ENCODE measurements at regions of chr16 and their contacts with region 1.

Region 1: DNA sequence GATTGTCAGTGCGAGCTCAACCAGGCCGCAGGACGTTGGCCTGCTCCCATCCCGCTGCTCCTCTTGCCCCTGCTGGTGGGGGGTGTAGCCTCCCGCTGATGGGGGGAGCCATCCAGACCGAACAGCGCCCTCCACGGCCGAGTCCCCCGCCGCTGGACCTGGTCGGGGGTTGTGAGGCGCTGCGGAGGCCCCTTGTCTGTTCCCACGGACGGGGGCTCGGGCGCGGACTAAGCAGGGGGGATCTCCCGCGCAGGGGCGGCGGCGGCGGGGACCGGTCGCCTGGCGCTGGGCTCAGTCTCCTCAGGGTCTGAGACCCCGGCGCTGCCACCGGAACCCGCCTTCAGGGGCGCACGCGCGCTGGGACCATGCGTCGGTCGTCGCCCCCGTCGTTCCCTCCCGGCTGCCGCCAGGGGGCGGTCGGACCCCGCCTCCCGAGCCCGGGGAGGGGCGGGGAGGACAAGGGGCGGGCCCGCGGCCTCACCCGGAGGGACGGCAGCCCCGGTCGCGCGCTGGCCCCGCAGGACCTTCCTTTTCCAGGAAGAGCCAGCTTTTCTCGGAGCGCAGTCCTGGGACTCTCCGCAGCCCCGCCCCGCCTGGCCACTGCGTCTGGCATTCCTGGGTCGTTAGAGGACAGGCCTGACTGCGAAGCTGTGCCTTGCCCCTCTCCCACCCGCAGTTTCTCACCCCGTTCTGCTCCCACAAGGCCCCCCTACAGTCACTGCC is 6.3 kb upstream of the IL32 start:
- DNase-seq: peak; percentile 41
- H3K4me3 ChIP-seq: peak overlapping the region; percentile 98
- H3K27me3 ChIP-seq: no peaks in the 10 kb centered on the region
- CTCF ChIP-seq: peak; percentile 51

Region 2: GRCh38 chr16:3038256-3038655 is 20.9 kb before region 1 on chr16:
- CTCF ChIA-PET with region 1: interaction called, 10 read pairs
- POLR2A ChIA-PET with region 1: no interaction called
- DNase-seq: no peak
- H3K4me3 ChIP-seq: no peak overlapping the region
- H3K27me3 ChIP-seq: peaks cover 47% of the 10 kb centered on the region
- CTCF ChIP-seq: no peak

Region 3: DNA sequence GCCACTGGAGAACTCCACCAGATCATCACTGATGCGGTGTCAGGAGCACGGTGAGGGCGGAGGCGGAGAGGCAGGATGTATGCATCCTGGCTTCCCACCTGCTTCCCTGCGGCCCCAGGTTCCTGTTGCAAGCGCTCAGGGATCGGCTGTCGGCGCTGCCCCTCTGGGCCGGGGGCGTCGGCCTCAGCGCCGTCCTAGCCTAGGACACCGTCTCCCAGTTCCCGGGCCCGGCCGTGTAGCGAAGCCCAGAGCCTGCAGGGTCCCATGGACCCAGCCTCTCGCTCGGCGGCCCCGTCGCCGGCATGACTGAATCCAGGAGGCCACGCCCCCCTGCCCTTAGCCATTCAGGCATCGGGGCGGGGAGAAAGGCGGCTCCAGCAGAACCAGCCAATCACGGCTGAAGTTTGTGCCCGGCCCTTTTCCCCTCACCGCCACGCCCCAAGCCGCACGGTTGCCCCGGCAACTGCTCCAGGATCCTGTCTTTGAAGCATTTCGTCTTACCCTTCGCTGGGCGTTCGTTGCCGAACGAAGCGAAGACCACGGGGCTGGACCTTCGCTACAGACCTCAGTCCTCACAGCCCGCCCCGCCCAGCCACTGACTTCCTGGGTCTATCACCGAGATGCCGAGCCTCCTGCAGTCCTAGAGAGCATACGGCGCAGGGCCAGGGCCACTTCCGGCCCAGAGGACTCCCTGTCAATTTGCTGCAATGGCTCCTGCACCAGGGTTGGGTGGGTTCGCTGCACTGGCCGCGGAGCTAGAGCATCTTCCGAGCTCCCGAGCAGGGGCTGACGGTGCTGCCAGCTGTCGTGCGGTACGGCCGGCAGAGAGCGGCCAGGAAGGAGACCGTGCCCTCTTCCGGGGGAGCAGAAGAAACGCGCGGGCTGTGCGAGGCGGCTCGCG is 65.1 kb after region 1 on chr16:
- CTCF ChIA-PET with region 1: interaction called, 56 read pairs
- POLR2A ChIA-PET with region 1: no interaction called
- DNase-seq: peak; percentile 61
- H3K4me3 ChIP-seq: peak overlapping the region; percentile 68
- H3K27me3 ChIP-seq: no peaks in the 10 kb centered on the region
- CTCF ChIP-seq: peak; percentile 51

Region 4: GRCh38 chr16:3158471-3159314 is 99.5 kb after region 1 on chr16:
- CTCF ChIA-PET with region 1: interaction called, 14 read pairs
- POLR2A ChIA-PET with region 1: no interaction called
- DNase-seq: no peak
- H3K4me3 ChIP-seq: peak overlapping the region; percentile 60
- H3K27me3 ChIP-seq: no peaks in the 10 kb centered on the region
- CTCF ChIP-seq: no peak

Measured in BJ (cell line).